CD4-positive, alpha-beta T cell (primary cell): ENCODE measurements at regions of chr7 and their contacts with region 1.

Region 1: DNA sequence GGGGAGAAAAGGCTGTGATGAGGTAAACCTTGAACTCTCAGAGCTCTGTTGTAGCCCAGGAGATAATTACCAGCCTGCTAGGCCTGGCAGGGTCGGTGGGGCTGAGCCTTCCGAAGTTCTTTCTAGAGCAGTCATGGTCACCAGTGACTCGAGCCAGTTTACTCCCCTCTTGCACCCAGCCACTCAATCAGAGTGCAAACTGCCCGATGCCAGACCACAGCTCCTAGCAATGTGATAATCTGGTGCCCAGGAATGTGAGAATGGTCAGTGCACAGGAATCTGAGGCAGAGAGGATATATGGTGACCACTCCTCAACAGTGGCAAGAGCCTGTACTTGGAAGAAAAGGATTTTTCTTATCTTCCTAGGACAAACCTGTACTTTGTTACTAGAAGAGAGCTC is 46.4 kb upstream of the KMT2E start:
- DNase-seq: no peak
- ATAC-seq: no peak
- H3K4me3 ChIP-seq: no peak overlapping the region
- H3K4me3 Mint-ChIP-seq: no peak overlapping the region
- H3K27ac ChIP-seq: no peak overlapping the region
- H3K27ac Mint-ChIP-seq: no peak overlapping the region
- H3K4me1 ChIP-seq: no peaks in the 10 kb centered on the region
- H3K4me1 Mint-ChIP-seq: no peaks in the 10 kb centered on the region
- H3K27me3 ChIP-seq: no peaks in the 10 kb centered on the region
- H3K27me3 Mint-ChIP-seq: no peaks in the 10 kb centered on the region
- CTCF ChIP-seq: no peak

Region 2: DNA sequence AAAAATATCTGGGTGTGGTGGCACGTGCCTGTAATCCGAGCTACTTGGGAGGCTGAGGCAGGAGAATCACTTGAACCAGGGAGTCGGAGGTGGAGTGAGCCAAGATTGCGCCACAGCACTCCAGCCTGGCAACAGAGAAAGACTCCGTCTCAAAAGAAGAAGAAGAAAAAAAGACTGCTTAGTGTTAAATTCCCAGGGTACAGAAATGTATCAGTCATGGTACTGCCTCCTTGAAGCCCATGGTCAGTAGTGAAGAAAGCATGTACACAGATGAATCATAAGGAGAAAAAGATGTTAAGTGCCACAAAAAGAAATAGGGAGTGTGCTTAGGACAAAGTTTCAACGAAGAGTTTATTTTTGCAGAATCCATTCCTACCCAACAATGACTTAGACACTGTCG is 16.0 kb before region 1 on chr7:
- CTCF ChIA-PET with region 1: no interaction called
- POLR2A ChIA-PET with region 1: no interaction called
- intact Hi-C with region 1: loop called in 1 of 2 experiments (anchors 2 kb)
- DNase-seq: peak in 1 of 14 experiments; percentile 33
- ATAC-seq: no peak
- H3K4me3 ChIP-seq: no peak overlapping the region
- H3K4me3 Mint-ChIP-seq: no peak overlapping the region
- H3K27ac ChIP-seq: no peak overlapping the region
- H3K27ac Mint-ChIP-seq: no peak overlapping the region
- H3K4me1 ChIP-seq: peaks cover 6% of the 10 kb centered on the region
- H3K4me1 Mint-ChIP-seq: peaks cover 15% of the 10 kb centered on the region
- H3K27me3 ChIP-seq: no peaks in the 10 kb centered on the region
- H3K27me3 Mint-ChIP-seq: no peaks in the 10 kb centered on the region
- CTCF ChIP-seq: no peak

Region 3: GRCh38 chr7:105304040-105304895 is 336.7 kb after region 1 on chr7:
- CTCF ChIA-PET with region 1: no interaction called
- POLR2A ChIA-PET with region 1: no interaction called
- intact Hi-C with region 1: no loop called
- DNase-seq: no peak
- ATAC-seq: no peak
- H3K4me3 ChIP-seq: no peak overlapping the region
- H3K4me3 Mint-ChIP-seq: peak overlapping the region; percentile 31
- H3K27ac ChIP-seq: no peak overlapping the region
- H3K27ac Mint-ChIP-seq: peak overlapping the region; percentile 9
- H3K4me1 ChIP-seq: peaks cover 16% of the 10 kb centered on the region
- H3K4me1 Mint-ChIP-seq: peaks cover 70% of the 10 kb centered on the region
- H3K27me3 ChIP-seq: no peaks in the 10 kb centered on the region
- H3K27me3 Mint-ChIP-seq: no peaks in the 10 kb centered on the region
- CTCF ChIP-seq: no peak